ENCODE measurements at regions of chr3 and their contacts with region 1.

Region 1: DNA sequence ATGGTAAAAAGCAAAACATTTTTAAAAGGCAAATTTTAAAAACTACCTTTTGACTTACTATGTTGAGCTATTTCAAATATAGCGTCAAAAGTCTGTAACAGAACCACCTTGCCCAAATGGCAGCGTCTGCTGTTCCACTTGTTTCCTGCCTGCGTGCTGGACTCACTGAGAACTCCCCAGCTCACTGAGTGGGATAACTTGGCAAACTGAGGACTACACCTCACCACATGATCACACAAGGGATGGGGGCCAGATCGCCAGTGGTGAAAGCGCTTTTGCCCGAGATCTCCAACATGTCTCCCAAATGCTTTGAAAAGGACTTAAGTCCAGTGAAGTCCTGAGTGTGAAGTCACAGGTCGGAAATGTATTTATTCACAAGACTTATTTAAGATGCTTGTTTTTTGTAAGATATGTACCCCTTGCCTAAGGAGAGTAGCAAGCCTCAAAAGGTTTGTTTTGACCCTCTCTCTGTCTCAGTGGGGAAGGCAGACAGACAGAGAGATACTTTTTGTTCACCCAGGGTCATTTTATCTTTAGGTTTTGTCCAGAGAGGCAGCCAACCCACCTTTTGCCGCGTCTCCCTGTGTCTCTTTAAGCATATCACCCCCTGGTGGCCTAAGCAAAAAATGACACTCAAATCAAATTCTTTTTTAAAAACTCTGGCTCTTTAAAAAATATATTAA is 192.6 kb downstream of the PDZRN3 start:
- DNase-seq: peak; percentile 53
- ATAC-seq: no peak
- H3K4me3 ChIP-seq: no peak overlapping the region
- H3K27ac ChIP-seq: no peak overlapping the region
- H3K4me1 ChIP-seq: no peaks in the 10 kb centered on the region
- H3K27me3 ChIP-seq: no peaks in the 10 kb centered on the region; a peak in 1 of 5 replicates
- CTCF ChIP-seq: peak; percentile 53
- EP300 ChIP-seq: no peak
- POLR2A ChIP-seq: no peak
- RAD21 ChIP-seq: no peak

Region 2: DNA sequence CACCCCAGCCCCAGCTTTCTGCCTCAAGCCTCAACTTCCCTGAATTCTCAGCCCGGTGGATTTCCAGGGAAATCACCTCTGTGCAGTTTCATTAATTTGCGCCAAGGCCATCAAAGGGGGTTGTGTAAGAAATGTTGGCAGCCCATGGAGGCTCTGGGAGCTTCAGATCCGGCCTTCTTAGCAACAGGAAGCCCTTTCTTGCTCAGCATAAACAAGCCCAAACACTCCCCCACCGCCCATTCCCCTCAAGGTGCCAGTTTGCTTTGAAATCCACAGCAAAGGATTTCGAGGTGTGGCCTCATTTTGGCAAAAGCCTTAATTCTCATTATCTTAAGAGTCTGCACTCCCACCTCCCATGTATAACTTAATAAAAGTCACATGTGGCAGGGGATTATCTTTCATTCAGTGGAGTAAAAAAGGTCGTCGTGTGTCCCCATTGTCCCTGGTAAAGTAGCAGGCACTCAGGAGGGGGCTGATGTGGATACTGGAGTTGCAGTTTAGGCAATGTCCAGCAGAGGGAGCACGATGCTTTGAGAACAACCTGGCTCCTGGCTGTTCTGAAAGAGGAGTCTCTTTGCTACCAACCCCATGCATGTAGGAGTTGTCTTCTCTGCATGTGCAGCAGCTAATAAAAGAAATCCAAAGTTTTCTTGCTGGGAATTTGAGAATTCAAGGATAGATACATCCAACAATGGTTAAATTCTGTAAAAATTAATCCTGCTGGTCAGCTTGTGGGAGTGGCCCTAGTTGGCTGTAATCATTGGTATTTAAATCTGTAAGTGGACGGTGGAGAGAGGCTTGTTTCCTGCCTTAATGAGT is 331.2 kb before region 1 on chr3:
- CTCF ChIA-PET with region 1: interaction called, 17 read pairs
- POLR2A ChIA-PET with region 1: no interaction called
- in situ Hi-C with region 1: loop called (anchors 5 kb)
- intact Hi-C with region 1: loop called (anchors 1 kb)
- DNase-seq: peak; percentile 75
- ATAC-seq: peak; percentile 95
- H3K4me3 ChIP-seq: no peak overlapping the region
- H3K27ac ChIP-seq: no peak overlapping the region
- H3K4me1 ChIP-seq: peaks cover 16% of the 10 kb centered on the region
- H3K27me3 ChIP-seq: no peaks in the 10 kb centered on the region
- CTCF ChIP-seq: peak; percentile 91
- EP300 ChIP-seq: no peak
- POLR2A ChIP-seq: no peak
- RAD21 ChIP-seq: peak; percentile 69; the same call in 1 of the 2 replicates

Region 3: DNA sequence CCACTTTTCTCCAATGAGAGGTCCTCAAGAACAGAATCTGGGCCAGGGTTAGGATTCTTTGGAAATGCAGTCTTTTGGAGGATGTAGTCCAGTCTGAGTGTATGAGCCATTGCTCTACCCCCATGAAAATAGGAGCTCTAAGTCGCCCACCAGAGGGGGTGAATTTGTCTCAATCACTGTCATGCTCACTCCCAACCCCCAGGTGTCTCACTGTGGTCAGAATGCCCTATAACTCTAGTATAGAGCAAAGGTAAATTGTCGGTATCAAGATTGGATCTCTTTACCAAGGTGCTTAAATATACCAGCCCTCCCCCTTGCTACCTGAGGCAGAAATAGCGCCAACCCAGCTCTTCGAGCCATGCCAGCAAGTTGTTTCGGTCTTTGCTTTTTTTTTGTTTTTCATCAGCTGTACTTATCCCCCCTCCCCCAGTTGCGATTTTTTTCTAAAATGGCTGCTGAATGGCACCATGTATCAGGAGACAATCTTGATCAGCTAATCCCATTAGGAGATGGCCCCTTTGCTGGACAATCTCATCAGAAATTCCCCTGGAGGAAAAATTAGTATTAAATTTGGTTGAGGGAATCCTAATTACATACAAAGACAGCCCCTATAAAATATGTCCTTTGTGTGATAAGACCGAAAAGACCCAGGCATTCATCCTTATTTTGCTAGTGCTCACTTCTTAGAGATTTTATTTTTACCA is 240.0 kb before region 1 on chr3:
- CTCF ChIA-PET with region 1: interaction called, 5 read pairs
- POLR2A ChIA-PET with region 1: no interaction called
- in situ Hi-C with region 1: no loop called
- intact Hi-C with region 1: loop called (anchors 1 kb)
- DNase-seq: peak; percentile 58
- ATAC-seq: peak; percentile 100
- H3K4me3 ChIP-seq: no peak overlapping the region
- H3K27ac ChIP-seq: no peak overlapping the region
- H3K4me1 ChIP-seq: no peaks in the 10 kb centered on the region
- H3K27me3 ChIP-seq: no peaks in the 10 kb centered on the region
- CTCF ChIP-seq: peak; percentile 40
- EP300 ChIP-seq: no peak
- POLR2A ChIP-seq: no peak
- RAD21 ChIP-seq: peak; percentile 46; the same call in 1 of the 2 replicates

Region 4: GRCh38 chr3:73656241-73656890 is 224.2 kb after region 1 on chr3:
- CTCF ChIA-PET with region 1: no interaction called
- POLR2A ChIA-PET with region 1: no interaction called
- in situ Hi-C with region 1: no loop called
- intact Hi-C with region 1: no loop called
- DNase-seq: no peak
- ATAC-seq: no peak
- H3K4me3 ChIP-seq: no peak overlapping the region
- H3K27ac ChIP-seq: no peak overlapping the region
- H3K4me1 ChIP-seq: no peaks in the 10 kb centered on the region
- H3K27me3 ChIP-seq: no peaks in the 10 kb centered on the region
- CTCF ChIP-seq: no peak
- EP300 ChIP-seq: no peak
- POLR2A ChIP-seq: no peak
- RAD21 ChIP-seq: no peak